ENCODE measurements at regions of chr14 and their contacts with region 1.

Region 1: GRCh38 chr14:77457522-77458290 is at the starts of genes AHSA1 and VIPAS39:
- DNase-seq: peak; percentile 86 to 99 (median 88)
- ATAC-seq: peak; percentile 94
- H3K4me3 ChIP-seq: peak within 1 kb of the TSS; percentile 98
- H3K4me3 Mint-ChIP-seq: peak within 1 kb of the TSS; percentile 100
- H3K27ac ChIP-seq: peak within 1 kb of the TSS; percentile 79 to 96
- H3K27ac Mint-ChIP-seq: peak within 1 kb of the TSS; percentile 90
- H3K4me1 ChIP-seq: peaks cover 31% of the 10 kb centered on the region
- H3K4me1 Mint-ChIP-seq: peaks cover 48% of the 10 kb centered on the region
- H3K27me3 ChIP-seq: no peaks in the 10 kb centered on the region
- H3K27me3 Mint-ChIP-seq: no peaks in the 10 kb centered on the region
- CTCF ChIP-seq: no peak
- total RNA-seq, gene AHSA1: 28.7 to 33.7 TPM
- total RNA-seq, gene VIPAS39: 7.6 to 8.7 TPM

Region 2: GRCh38 chr14:77086017-77086736 is 371.5 kb before region 1 on chr14:
- CTCF ChIA-PET with region 1: no interaction called
- POLR2A ChIA-PET with region 1: no interaction called
- intact Hi-C with region 1: no loop called
- DNase-seq: peak in 4 of 14 experiments; percentile 27 to 75 (median 46)
- ATAC-seq: peak; percentile 88
- H3K4me3 ChIP-seq: no peak overlapping the region
- H3K4me3 Mint-ChIP-seq: no peak overlapping the region
- H3K27ac ChIP-seq: no peak overlapping the region
- H3K27ac Mint-ChIP-seq: peak overlapping the region; percentile 46
- H3K4me1 ChIP-seq: peaks cover 10% of the 10 kb centered on the region
- H3K4me1 Mint-ChIP-seq: peaks cover 19% of the 10 kb centered on the region
- H3K27me3 ChIP-seq: no peaks in the 10 kb centered on the region
- H3K27me3 Mint-ChIP-seq: no peaks in the 10 kb centered on the region
- CTCF ChIP-seq: no peak

Region 3: DNA sequence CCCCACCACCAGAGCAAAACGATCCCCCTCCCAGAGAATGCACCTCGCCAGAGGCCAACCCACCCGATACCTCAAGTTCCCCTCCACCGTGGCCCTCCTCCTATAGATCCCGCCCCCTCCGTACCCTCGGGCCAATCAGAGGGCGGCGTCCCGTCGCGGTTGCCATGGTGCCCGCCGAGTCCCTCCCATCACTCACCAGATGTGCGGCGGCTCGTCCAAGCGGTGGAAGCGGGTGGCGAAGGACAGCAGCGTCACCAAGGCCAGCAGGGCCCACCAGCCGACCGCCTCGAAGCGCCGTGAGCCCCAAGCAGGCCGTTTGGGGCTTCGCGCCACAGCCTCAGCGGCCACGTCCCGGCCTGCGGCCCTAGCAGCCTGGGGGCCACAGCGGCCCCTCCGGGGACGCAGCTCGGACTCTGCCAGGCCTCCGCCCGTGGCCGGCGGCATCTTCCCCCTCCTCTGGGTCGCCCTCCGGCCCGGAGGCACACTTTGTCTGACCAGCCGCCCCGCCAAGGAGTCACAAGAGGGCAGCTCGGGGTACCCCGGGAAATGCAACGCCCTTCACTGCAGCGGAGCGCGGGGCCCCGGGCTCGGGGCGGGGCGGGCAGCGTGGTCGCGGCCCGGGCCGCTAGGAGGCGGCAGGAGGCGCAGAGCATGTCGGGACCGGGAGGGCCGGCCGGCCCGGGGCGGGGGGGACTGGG is 137.3 kb before region 1 on chr14 and contains the start of gene POMT2:
- CTCF ChIA-PET with region 1: interaction called, 3 read pairs
- POLR2A ChIA-PET with region 1: interaction called, 14 read pairs
- intact Hi-C with region 1: loop called (anchors 1 kb)
- DNase-seq: peak; percentile 86 to 95 (median 90)
- ATAC-seq: peak; percentile 47
- H3K4me3 ChIP-seq: peak within 1 kb of the TSS; percentile 93
- H3K4me3 Mint-ChIP-seq: peak within 1 kb of the TSS; percentile 100
- H3K27ac ChIP-seq: peak within 1 kb of the TSS; percentile 95 to 98
- H3K27ac Mint-ChIP-seq: peak within 1 kb of the TSS; percentile 100
- H3K4me1 ChIP-seq: peaks cover 23% of the 10 kb centered on the region
- H3K4me1 Mint-ChIP-seq: peaks cover 31% of the 10 kb centered on the region
- H3K27me3 ChIP-seq: no peaks in the 10 kb centered on the region
- H3K27me3 Mint-ChIP-seq: no peaks in the 10 kb centered on the region
- CTCF ChIP-seq: peak; percentile 38
- total RNA-seq, gene POMT2: 7.6 to 8.2 TPM

Region 4: DNA sequence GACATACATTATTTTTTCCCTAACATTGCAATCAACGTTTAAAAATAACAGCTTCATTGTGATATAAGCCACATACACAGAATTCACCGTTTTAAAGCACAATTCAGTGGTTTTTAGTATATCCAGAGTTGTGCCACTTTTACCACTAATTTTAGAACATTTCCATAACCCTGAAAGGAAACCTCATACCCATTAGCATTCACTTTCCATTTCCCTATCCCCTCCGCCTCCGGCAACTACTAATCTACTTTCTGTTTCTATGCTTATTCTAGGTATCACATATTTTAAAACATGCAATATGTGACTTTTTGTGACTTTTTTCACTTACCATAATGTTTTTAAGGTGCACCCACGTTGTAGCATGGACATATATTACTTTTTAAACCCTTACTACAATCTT is 96.5 kb after region 1 on chr14:
- CTCF ChIA-PET with region 1: no interaction called
- POLR2A ChIA-PET with region 1: no interaction called
- intact Hi-C with region 1: loop called in 1 of 2 experiments (anchors 5 kb)
- DNase-seq: no peak
- ATAC-seq: no peak
- H3K4me3 ChIP-seq: no peak overlapping the region
- H3K4me3 Mint-ChIP-seq: no peak overlapping the region
- H3K27ac ChIP-seq: peak overlapping the region in 1 of 2 donors; percentile 1
- H3K27ac Mint-ChIP-seq: peak overlapping the region; percentile 15
- H3K4me1 ChIP-seq: no peaks in the 10 kb centered on the region
- H3K4me1 Mint-ChIP-seq: peaks cover 8% of the 10 kb centered on the region
- H3K27me3 ChIP-seq: no peaks in the 10 kb centered on the region
- H3K27me3 Mint-ChIP-seq: no peaks in the 10 kb centered on the region
- CTCF ChIP-seq: no peak

Region 5: DNA sequence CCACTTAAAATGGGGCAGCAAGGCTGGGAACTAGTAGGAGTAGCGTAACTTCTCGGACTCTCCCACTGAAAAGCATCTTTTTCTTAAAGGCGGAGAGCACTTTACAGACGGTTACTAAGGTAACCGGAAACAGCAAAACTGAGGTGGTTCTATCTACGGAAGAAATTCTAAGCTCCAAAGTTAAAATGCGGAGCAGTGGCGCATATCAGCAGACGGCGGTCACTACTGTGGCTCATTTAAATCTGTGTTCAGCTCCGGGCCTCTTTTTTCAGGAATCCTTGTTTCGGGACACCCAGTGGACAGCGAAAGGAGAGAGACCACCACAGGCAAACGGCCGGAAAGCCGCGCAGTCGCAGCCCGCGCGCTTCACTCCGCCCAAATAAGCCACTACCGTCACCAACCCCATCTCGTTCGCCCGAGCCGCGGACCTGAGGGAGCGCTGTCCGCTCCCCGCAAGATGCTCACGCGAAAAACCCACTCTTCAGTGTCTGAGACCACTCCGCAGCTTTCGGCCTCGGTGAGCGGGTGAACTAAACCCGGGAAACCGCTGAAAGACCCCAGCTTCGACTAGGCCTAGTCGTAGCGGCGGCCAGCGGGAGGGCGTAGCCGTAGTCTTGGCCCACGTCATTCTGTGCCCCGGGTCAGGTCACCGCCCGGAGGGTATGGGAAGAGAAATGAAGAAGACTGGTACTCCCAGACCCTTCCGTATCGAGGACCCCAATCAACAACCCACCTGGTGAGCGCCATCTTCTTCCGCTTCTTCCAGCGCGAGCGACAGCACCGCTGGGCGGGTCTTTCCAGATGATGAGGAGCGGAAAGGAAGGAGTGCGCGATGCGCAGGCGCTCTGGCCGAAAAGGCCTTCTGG is 302.9 kb after region 1 on chr14 and contains the start of gene SNW1:
- CTCF ChIA-PET with region 1: interaction called, 4 read pairs
- POLR2A ChIA-PET with region 1: interaction called, 3 read pairs
- intact Hi-C with region 1: loop called (anchors 2 kb)
- DNase-seq: peak; percentile 79 to 98 (median 87)
- ATAC-seq: peak; percentile 90
- H3K4me3 ChIP-seq: peak within 1 kb of the TSS; percentile 59
- H3K4me3 Mint-ChIP-seq: peak within 1 kb of the TSS; percentile 99
- H3K27ac ChIP-seq: peak within 1 kb of the TSS; percentile 89 to 94
- H3K27ac Mint-ChIP-seq: peak within 1 kb of the TSS; percentile 99
- H3K4me1 ChIP-seq: peaks cover 42% of the 10 kb centered on the region
- H3K4me1 Mint-ChIP-seq: peaks cover 45% of the 10 kb centered on the region
- H3K27me3 ChIP-seq: no peaks in the 10 kb centered on the region
- H3K27me3 Mint-ChIP-seq: no peaks in the 10 kb centered on the region
- CTCF ChIP-seq: no peak
- total RNA-seq, gene SNW1: 131 to 136 TPM